Transverse colon (tissue), 4 donors: ENCODE measurements at regions of chr6 and their contacts with region 1.

Region 1: DNA sequence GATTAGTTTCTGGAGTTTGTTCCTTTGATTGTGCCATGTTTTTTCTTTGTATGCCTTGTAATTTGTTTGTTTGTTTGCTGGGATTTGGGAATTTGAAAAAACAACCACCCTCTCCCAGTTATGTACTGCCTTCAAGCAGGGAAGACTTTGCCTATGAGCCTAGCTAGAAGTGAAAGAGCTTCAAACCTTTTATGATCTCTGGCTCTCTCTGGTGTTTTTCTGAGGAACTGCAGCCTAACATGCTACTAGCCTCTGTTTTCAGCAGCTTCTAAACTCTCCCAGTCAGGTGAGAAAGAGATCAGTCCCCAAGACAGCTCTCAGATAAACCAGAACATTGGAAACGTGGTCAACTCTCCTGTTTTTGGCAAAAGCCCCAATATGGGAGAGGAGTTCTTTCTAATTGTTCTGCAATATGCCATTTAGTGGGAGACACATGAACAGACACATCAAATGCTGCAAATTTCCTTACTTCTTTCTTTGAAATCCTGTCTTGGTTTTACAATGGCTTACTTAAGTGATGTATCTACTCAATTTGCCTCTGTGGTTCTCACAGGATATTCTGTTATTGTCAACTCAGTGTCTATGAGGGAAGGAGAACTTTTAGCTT is 58.9 kb upstream of the SERINC1 start:
- DNase-seq: peak; percentile 58
- H3K4me3 ChIP-seq: no peak overlapping the region
- H3K27ac ChIP-seq: no peak overlapping the region
- H3K4me1 ChIP-seq: no peaks in the 10 kb centered on the region
- H3K27me3 ChIP-seq: peaks cover 8% of the 10 kb centered on the region
- CTCF ChIP-seq: peak; percentile 83 to 89 (median 84)
- EP300 ChIP-seq: no peak
- POLR2A ChIP-seq: no peak

Region 2: DNA sequence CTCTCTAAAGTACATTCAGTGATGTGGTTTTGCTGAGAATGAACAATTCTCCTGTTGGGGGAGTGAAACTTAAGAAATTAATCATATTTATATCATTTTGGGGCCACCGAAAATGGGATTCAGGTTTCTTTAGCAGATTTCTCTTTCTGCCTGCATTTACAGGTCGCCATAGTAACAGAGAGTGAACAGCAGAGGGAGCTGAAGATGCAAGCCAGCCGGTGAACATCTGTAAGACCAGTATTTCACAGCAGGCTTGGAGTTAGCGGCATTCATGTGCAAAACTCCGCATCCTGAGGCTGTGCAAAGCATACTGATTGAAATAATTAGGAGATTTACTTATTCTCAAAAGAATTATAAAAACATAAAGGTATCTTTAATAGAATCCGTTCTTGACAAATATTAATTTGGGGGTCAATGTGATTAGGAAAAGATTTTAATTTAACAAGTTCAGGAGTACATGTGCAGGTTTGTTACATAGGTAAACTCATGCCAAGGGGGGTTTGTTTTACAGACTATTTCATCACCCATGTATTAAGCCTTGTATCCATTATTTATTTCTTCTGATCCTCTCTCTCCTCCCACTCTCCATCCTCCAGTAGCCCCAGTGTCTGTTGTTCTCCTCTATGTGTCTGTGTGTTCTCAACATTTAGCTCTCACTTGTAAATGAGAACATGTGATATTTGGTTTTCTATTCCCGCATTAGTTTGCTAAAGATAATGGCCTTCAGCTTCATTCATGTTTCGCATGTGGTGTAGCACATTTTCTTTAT is 148.9 kb before region 1 on chr6:
- in situ Hi-C with region 1: loop called in 2 of 4 experiments (anchors 5 to 25 kb)
- intact Hi-C with region 1: loop called (anchors 5 kb)
- DNase-seq: peak; percentile 49
- H3K4me3 ChIP-seq: no peak overlapping the region
- H3K27ac ChIP-seq: no peak overlapping the region
- H3K4me1 ChIP-seq: no peaks in the 10 kb centered on the region
- H3K27me3 ChIP-seq: no peaks in the 10 kb centered on the region
- CTCF ChIP-seq: peak; percentile 66 to 77 (median 72)
- EP300 ChIP-seq: no peak
- POLR2A ChIP-seq: no peak

Region 3: GRCh38 chr6:122399384-122400158 is 131.0 kb before region 1 on chr6 and contains the start of gene HSF2:
- in situ Hi-C with region 1: loop called in 1 of 4 experiments (anchors 25 kb)
- intact Hi-C with region 1: no loop called
- DNase-seq: peak; percentile 96
- H3K4me3 ChIP-seq: peak within 1 kb of the TSS; percentile 95 to 99 (median 96)
- H3K27ac ChIP-seq: peak within 1 kb of the TSS; percentile 89 to 96 (median 92)
- H3K4me1 ChIP-seq: peaks cover 0 to 21% (median 16%) of the 10 kb centered on the region in 4 donors
- H3K27me3 ChIP-seq: no peaks in the 10 kb centered on the region
- CTCF ChIP-seq: peak in 2 of 5 experiments; percentile 25 to 26
- EP300 ChIP-seq: no peak
- POLR2A ChIP-seq: peak; percentile 51
- total RNA-seq, gene HSF2: 6.0 to 20.5 (median 9.9) TPM

Region 4: DNA sequence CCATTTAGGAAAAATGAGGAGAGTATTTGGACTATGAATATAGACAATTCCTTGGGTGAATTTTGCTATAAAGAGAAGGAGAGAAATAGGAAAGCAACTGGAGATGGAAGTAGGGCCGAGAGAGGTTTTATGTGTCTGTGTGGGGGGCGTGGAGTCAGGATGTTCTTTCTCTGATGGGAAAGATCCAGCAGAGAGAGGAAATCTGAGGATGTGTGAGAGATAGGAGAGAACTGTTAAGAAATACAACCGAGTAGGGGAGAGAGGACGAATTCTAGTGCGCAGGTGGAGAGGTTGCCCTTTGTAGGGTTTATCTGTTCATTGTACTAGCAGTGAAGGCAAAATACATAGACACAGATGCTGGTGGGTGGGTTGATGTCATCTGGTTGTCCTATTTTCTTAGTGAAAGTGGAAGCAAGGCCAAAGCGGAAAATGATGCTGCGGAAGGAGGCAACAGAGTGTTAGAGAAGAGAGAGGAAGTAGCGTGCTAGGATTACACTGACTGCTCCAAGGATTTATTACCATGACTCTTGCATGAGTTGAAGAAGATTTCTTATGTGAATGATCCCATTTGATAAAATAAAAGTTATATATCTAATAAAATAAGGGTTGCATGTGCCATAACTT is 523.2 kb after region 1 on chr6:
- in situ Hi-C with region 1: no loop called
- intact Hi-C with region 1: no loop called
- DNase-seq: no peak
- H3K4me3 ChIP-seq: no peak overlapping the region
- H3K27ac ChIP-seq: no peak overlapping the region
- H3K4me1 ChIP-seq: no peaks in the 10 kb centered on the region
- H3K27me3 ChIP-seq: no peaks in the 10 kb centered on the region
- CTCF ChIP-seq: no peak
- EP300 ChIP-seq: no peak
- POLR2A ChIP-seq: no peak